ENCODE measurements at regions of chr19 and their contacts with region 1.

Region 1: DNA sequence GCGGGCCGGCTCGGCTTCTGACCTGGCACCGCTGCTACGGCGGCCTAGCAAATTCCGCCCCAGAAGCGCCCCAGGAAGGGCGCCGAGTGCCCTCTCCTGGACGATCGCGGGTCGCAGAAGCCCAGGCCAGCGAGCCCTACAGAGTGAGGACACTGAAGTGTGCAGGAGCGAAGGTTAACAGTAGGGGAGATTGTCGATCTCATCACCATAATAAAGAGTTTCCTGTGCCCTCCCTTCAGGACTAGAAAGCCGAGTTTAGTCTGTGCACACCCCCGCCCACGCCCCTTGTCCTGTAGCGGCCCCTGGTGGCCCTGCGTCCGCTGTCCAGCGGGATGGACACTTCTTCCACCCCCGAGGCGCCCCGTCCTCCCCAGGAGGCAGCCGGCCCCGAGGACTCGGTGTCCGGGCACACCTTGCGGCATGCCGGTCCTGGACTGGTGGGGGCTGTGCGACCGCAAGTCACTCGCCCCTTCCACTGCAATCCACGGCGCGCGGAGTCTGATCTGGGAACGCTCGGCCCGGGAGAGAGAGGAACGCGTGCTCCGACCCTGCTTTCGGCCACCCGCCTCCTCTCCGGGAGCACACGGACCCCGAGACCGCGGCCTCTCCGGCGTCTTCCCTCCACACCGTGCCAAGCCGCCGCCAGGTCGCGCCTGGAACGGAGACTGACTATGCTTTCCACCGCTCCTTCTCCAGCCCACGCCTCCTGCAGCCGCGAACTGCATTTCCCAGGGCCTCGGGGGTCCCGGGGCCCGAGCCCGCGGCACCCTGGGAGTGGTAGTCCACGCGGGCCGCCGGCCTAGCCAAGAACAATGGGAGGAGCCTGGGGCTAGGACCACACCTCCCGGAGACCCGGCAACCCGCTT is 769 bp upstream of the KMT2B start:
- DNase-seq: peak; percentile 94 to 97 (median 96)
- H3K4me3 ChIP-seq: peak overlapping the region; percentile 0 to 99 (median 78)
- H3K27ac ChIP-seq: peak overlapping the region; percentile 68 to 99 (median 85)
- H3K4me1 ChIP-seq: peaks cover 21 to 26% of the 10 kb centered on the region in 2 donors
- H3K27me3 ChIP-seq: no peaks in the 10 kb centered on the region
- CTCF ChIP-seq: peak; percentile 59 to 98 (median 92)
- POLR2A ChIP-seq: peak in 1 of 2 donors; percentile 4

Region 2: DNA sequence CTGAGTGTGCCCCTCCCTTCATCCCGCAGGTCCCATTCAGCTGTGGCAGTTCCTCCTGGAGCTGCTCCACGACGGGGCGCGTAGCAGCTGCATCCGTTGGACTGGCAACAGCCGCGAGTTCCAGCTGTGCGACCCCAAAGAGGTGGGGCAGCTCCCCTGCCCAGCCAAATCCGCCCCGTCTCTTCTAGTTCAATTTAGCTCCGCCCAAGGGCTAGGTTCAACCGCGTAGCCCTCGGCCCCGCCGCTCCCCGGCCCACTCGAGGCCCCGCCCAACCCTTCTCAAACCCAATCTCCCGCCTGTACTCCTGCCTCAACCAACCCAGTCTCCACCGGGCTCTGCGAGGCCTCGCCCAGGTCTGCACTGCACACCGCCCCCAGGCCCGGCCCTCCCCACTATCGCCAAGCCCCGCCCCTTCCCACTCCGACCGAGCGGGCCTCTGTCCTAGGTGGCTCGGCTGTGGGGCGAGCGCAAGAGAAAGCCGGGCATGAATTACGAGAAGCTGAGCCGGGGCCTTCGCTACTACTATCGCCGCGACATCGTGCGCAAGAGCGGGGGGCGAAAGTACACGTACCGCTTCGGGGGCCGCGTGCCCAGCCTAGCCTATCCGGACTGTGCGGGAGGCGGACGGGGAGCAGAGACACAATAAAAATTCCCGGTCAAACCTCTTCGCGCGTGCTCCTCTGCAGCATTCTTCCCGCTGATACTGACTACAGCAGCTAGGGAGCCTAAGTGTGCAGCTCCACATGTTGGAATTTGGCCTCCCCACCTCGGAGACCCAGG is 72.6 kb before region 1 on chr19:
- intact Hi-C with region 1: no loop called
- DNase-seq: peak; percentile 95 to 98 (median 97)
- H3K4me3 ChIP-seq: peak overlapping the region in 3 of 4 donors; percentile 42 to 58 (median 55)
- H3K27ac ChIP-seq: peak overlapping the region; percentile 73 to 92 (median 81)
- H3K4me1 ChIP-seq: peaks cover 14 to 20% of the 10 kb centered on the region in 2 donors
- H3K27me3 ChIP-seq: no peaks in the 10 kb centered on the region
- CTCF ChIP-seq: peak in 1 of 6 experiments; percentile 18
- POLR2A ChIP-seq: peak in 1 of 2 donors; percentile 74

Region 3: GRCh38 chr19:35693830-35694599 is 23.0 kb before region 1 on chr19:
- intact Hi-C with region 1: loop called in 1 of 2 experiments (anchors 2 kb)
- DNase-seq: peak; percentile 87 to 96 (median 90)
- H3K4me3 ChIP-seq: no peak overlapping the region
- H3K27ac ChIP-seq: no peak overlapping the region
- H3K4me1 ChIP-seq: no peaks in the 10 kb centered on the region
- H3K27me3 ChIP-seq: no peaks in the 10 kb centered on the region
- CTCF ChIP-seq: peak; percentile 96 to 100 (median 98)
- POLR2A ChIP-seq: peak in 1 of 2 donors; percentile 12